ENCODE measurements at regions of chr20 and their contacts with region 1.

Region 1: GRCh38 chr20:37007898-37008649 is 56.6 kb upstream of the SAMHD1 start:
- DNase-seq: peak; percentile 44 to 69 (median 62)
- H3K4me3 ChIP-seq: no peak overlapping the region
- H3K4me3 Mint-ChIP-seq: peak overlapping the region in 4 of 8 donors; percentile 29 to 66 (median 64)
- H3K27ac ChIP-seq: peak overlapping the region; percentile 26
- H3K27ac Mint-ChIP-seq: peak overlapping the region; percentile 43 to 92 (median 85)
- H3K4me1 ChIP-seq: peaks cover 17% of the 10 kb centered on the region
- H3K4me1 Mint-ChIP-seq: peaks cover 10 to 19% (median 15%) of the 10 kb centered on the region in 4 donors
- H3K27me3 ChIP-seq: no peaks in the 10 kb centered on the region
- H3K27me3 Mint-ChIP-seq: no peaks in the 10 kb centered on the region

Region 2: DNA sequence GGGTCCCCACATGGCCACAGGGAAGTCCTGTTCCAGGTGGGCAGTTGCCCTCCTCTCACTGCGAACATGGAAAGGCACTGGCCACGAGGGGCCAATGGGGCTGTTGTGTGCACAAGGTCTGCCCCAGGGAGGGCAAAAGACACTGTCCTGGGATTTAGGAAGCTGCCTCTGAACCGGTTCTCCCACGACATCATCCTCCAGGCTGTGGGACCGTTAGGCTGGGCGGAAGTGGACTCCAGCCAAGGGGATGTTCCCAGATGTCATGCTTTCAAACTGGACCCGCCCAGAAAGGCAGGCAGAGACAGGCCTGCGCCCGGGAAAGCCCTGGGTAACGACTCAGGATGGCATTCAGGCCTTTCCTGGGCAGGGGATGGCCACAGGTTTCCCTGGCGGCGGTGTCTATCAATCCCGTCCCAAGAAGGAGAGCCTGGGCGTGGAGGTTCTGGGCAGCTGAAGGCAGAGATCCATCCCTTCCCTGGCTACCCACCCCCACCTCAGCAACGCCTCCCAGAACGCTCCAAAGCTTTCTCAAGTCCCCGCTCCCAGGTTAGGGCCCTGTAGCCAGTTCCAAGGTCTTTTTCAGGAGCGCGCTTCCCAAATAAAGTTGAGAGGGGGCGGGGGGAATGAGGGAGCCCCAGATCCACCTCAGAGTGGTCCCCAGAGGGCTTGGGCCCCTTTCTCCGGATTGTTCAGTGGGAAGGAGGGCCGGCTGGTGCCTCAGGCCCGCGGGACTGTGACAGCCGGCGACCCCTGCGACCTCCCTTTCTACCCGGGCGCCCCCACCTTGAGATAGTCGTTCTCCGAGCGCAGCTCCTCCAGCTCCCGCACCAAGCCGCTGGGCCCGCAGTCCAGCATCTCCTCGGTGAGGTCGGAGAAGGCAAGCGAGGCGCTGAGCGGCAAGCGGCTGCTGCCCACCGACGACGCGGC is 145.9 kb before region 1 on chr20:
- CTCF ChIA-PET with region 1: no interaction called
- POLR2A ChIA-PET with region 1: no interaction called
- intact Hi-C with region 1: no loop called
- DNase-seq: no peak
- H3K4me3 ChIP-seq: no peak overlapping the region
- H3K4me3 Mint-ChIP-seq: peak overlapping the region; percentile 15 to 71 (median 48)
- H3K27ac ChIP-seq: no peak overlapping the region
- H3K27ac Mint-ChIP-seq: no peak overlapping the region
- H3K4me1 ChIP-seq: peaks cover 3% of the 10 kb centered on the region
- H3K4me1 Mint-ChIP-seq: peaks cover 2 to 12% (median 3%) of the 10 kb centered on the region in 4 donors
- H3K27me3 ChIP-seq: peaks cover 6% of the 10 kb centered on the region
- H3K27me3 Mint-ChIP-seq: peaks cover 18 to 29% of the 10 kb centered on the region in 2 donors

Region 3: GRCh38 chr20:36919715-36920333 is 88.2 kb before region 1 on chr20:
- CTCF ChIA-PET with region 1: interaction called, 12 read pairs
- POLR2A ChIA-PET with region 1: no interaction called
- intact Hi-C with region 1: no loop called
- DNase-seq: peak; percentile 58 to 66 (median 61)
- H3K4me3 ChIP-seq: no peak overlapping the region
- H3K4me3 Mint-ChIP-seq: no peak overlapping the region
- H3K27ac ChIP-seq: no peak overlapping the region
- H3K27ac Mint-ChIP-seq: peak overlapping the region; percentile 13 to 84 (median 60)
- H3K4me1 ChIP-seq: peaks cover 21% of the 10 kb centered on the region
- H3K4me1 Mint-ChIP-seq: peaks cover 7 to 20% (median 11%) of the 10 kb centered on the region in 4 donors
- H3K27me3 ChIP-seq: no peaks in the 10 kb centered on the region
- H3K27me3 Mint-ChIP-seq: no peaks in the 10 kb centered on the region

Region 4: DNA sequence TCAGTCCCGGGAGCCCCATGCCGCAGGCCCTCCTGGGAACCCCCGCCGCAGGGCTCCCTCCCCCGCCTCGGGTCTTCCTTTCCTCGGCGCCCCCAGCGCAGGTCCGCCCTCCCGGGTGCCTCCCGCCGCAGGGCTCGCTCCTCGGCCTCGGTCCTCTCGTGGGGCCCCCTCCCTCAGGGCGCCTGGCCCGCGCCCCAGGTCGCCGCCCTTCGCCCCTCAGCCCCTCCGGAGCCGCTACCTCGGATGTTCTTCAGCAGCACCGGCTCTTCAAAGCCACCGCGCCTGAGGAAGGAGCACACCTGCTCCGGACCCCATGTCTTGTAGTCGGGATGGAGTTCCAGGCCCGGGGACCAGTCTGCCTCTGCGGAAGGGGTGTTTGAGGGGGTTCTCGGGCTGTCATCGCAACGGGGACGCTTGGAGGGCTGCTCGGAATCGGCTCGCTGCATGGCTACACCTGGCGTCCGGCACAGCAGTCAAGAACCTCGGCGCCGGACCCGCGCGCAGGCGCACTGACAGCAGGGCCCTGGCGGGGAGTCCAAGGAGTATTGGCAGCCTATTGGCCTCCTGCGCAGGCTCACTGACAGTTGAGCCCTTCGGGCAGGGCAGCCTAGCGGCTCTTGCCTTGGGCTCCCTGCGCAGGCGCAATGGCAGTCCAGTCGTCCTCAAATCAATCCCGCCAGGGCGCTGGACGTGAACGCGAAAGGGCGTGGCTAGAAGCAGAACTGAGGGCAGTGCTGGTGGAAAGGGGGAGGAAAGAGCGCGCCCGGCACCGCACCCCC is 56.7 kb before region 1 on chr20 and contains the start of gene SAMHD1:
- CTCF ChIA-PET with region 1: interaction called, 11 read pairs
- POLR2A ChIA-PET with region 1: interaction called, 11 read pairs
- intact Hi-C with region 1: loop called (anchors 2 kb)
- DNase-seq: peak; percentile 86 to 89 (median 86)
- H3K4me3 ChIP-seq: peak within 1 kb of the TSS; percentile 90 to 98
- H3K4me3 Mint-ChIP-seq: peak within 1 kb of the TSS; percentile 95 to 100 (median 98)
- H3K27ac ChIP-seq: peak within 1 kb of the TSS; percentile 87
- H3K27ac Mint-ChIP-seq: peak within 1 kb of the TSS; percentile 94 to 100 (median 98)
- H3K4me1 ChIP-seq: peaks cover 49% of the 10 kb centered on the region
- H3K4me1 Mint-ChIP-seq: peaks cover 24 to 55% (median 35%) of the 10 kb centered on the region in 4 donors
- H3K27me3 ChIP-seq: no peaks in the 10 kb centered on the region
- H3K27me3 Mint-ChIP-seq: no peaks in the 10 kb centered on the region
- total RNA-seq, gene SAMHD1: 216 to 223 TPM

Region 5: GRCh38 chr20:37020636-37021035 is 12.6 kb after region 1 on chr20:
- CTCF ChIA-PET with region 1: interaction called, 35 read pairs
- POLR2A ChIA-PET with region 1: interaction called, 4 read pairs
- intact Hi-C with region 1: no loop called
- DNase-seq: no peak
- H3K4me3 ChIP-seq: no peak overlapping the region
- H3K4me3 Mint-ChIP-seq: no peak overlapping the region
- H3K27ac ChIP-seq: no peak overlapping the region
- H3K27ac Mint-ChIP-seq: no peak overlapping the region
- H3K4me1 ChIP-seq: peaks cover 24% of the 10 kb centered on the region
- H3K4me1 Mint-ChIP-seq: peaks cover 12 to 29% (median 20%) of the 10 kb centered on the region in 4 donors
- H3K27me3 ChIP-seq: no peaks in the 10 kb centered on the region
- H3K27me3 Mint-ChIP-seq: no peaks in the 10 kb centered on the region

Region 6: GRCh38 chr20:37066168-37066567 is 58.1 kb after region 1 on chr20:
- CTCF ChIA-PET with region 1: interaction called, 10 read pairs
- POLR2A ChIA-PET with region 1: no interaction called
- intact Hi-C with region 1: no loop called
- DNase-seq: no peak
- H3K4me3 ChIP-seq: no peak overlapping the region
- H3K4me3 Mint-ChIP-seq: no peak overlapping the region
- H3K27ac ChIP-seq: no peak overlapping the region
- H3K27ac Mint-ChIP-seq: peak overlapping the region in 1 of 7 donors; percentile 57
- H3K4me1 ChIP-seq: peaks cover 4% of the 10 kb centered on the region
- H3K4me1 Mint-ChIP-seq: peaks cover 0 to 4% (median 4%) of the 10 kb centered on the region in 4 donors
- H3K27me3 ChIP-seq: no peaks in the 10 kb centered on the region
- H3K27me3 Mint-ChIP-seq: no peaks in the 10 kb centered on the region

Region 7: GRCh38 chr20:37095599-37096414 is 87.7 kb after region 1 on chr20 and contains the start of gene RBL1:
- CTCF ChIA-PET with region 1: interaction called, 41 read pairs
- POLR2A ChIA-PET with region 1: interaction called, 20 read pairs
- intact Hi-C with region 1: loop called (anchors 1 kb)
- DNase-seq: peak; percentile 90 to 92 (median 91)
- H3K4me3 ChIP-seq: peak within 1 kb of the TSS; percentile 92
- H3K4me3 Mint-ChIP-seq: peak within 1 kb of the TSS; percentile 98 to 100 (median 99)
- H3K27ac ChIP-seq: peak within 1 kb of the TSS; percentile 85
- H3K27ac Mint-ChIP-seq: peak within 1 kb of the TSS; percentile 99 to 100 (median 100)
- H3K4me1 ChIP-seq: peaks cover 37% of the 10 kb centered on the region
- H3K4me1 Mint-ChIP-seq: peaks cover 18 to 47% (median 30%) of the 10 kb centered on the region in 4 donors
- H3K27me3 ChIP-seq: no peaks in the 10 kb centered on the region
- H3K27me3 Mint-ChIP-seq: peaks cover 0 to 4% of the 10 kb centered on the region in 2 donors
- total RNA-seq, gene RBL1: 29.9 to 39.6 TPM

Region 8: GRCh38 chr20:37192137-37192854 is 184.2 kb after region 1 on chr20:
- CTCF ChIA-PET with region 1: interaction called, 14 read pairs
- POLR2A ChIA-PET with region 1: interaction called, 3 read pairs
- intact Hi-C with region 1: loop called (anchors 5 kb)
- DNase-seq: peak; percentile 54 to 72 (median 63)
- H3K4me3 ChIP-seq: no peak overlapping the region
- H3K4me3 Mint-ChIP-seq: peak overlapping the region in 3 of 8 donors; percentile 4 to 57 (median 17)
- H3K27ac ChIP-seq: no peak overlapping the region
- H3K27ac Mint-ChIP-seq: peak overlapping the region in 6 of 7 donors; percentile 16 to 81 (median 28)
- H3K4me1 ChIP-seq: peaks cover 74% of the 10 kb centered on the region
- H3K4me1 Mint-ChIP-seq: peaks cover 58 to 78% (median 69%) of the 10 kb centered on the region in 4 donors
- H3K27me3 ChIP-seq: no peaks in the 10 kb centered on the region
- H3K27me3 Mint-ChIP-seq: no peaks in the 10 kb centered on the region